Endothelial cell of umbilical vein (primary cell): ENCODE measurements at regions of chr17 and their contacts with region 1.

Region 1: DNA sequence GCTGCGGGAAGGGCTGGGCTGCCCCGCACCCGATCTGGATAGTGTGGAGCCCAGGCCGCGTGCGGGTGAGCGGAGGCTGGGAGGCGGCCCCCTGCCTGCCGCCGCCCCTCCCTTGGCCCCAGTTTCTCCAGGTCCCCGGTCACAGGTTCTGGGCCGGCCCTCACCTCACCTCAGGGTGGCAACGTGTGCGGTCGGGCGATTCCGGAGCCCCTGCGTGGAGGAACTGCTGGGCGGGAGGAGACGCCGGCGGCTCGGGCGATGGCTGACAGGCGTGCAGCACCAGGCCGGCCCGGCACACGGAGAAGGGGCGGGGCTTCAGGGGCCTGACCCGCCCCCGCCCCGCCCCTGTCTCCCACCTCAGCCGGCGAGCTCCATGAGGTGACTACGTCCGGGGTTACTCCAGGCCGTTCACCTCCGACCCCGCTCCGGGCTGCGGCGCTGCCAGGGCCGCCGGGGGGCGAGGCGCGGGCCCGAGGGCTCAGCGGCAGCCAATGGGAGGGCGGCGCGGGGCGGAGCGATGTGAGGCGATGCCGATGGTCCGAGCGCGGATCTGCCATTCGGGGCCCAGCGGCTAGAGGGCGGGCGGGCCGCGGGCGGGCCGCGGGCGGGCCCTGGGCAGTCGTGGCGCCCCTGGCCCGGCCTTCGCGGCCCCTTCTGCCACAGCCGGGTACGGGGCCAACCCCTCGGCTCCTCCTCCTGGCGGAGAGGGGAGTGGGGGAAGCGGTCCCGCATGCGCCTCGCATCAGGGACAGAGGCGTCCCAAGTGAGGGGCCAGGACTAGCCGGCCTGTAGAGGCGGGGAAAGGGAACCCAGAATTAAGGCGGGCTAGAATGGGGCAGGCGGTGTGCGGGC is 16.7 kb upstream of the C17orf78 start:
- DNase-seq: peak; percentile 95
- H3K4me3 ChIP-seq: peak overlapping the region; percentile 47 to 89 (median 84)
- H3K27ac ChIP-seq: peak overlapping the region; percentile 50
- H3K4me1 ChIP-seq: peaks cover 21% of the 10 kb centered on the region
- H3K27me3 ChIP-seq: no peaks in the 10 kb centered on the region
- CTCF ChIP-seq: peak in 1 of 2 donors; percentile 13
- POLR2A ChIP-seq: no peak

Region 2: DNA sequence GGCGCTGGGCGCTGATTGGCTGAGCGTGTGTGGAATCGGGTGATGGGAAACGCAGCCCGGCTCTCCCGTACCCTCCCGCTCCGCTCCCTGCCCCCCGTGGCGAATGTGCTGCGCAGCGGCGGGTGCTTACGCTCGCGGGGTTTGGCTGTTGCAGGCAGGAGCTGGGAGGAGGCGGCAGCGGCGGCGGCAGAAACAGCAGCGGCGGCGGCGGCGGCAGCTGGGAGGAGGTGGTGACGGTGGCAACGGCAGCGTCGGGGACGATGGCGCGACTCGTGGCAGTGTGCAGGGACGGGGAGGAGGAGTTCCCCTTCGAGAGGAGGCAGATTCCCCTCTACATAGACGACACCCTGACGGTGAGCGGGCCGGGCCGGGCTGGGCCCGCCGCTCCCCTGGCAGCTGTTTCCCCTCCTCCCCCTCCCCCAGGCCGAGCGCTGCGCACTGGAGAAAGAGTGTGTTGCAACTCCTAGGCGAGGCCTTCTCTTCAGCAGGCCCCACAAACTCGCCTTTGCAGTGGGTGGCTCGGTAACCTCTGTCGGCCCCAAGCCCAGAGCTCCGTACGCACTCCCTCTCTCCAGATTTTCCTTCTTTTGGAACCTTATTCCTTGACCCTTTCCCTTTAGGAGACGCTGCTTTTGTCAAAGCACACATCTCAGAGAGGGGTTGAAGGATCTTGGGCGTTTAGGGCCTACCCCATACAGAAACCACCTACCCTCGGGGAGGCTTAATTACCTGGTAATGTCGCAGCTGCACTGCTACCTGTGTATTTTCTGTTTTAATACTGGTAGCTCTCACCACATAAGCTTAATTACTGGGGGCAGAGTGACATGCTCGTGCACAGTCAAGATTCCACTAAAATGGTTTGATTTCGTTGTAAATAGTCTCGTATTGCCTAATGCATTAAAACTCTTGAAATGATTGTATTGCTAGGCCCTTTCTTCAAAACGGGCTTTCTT is 813.3 kb before region 1 on chr17:
- CTCF ChIA-PET with region 1: no interaction called
- POLR2A ChIA-PET with region 1: no interaction called
- dilution Hi-C with region 1: no loop called
- intact Hi-C with region 1: loop called (anchors 5 kb)
- DNase-seq: peak; percentile 96
- H3K4me3 ChIP-seq: peak overlapping the region; percentile 11 to 99 (median 78)
- H3K27ac ChIP-seq: peak overlapping the region; percentile 59
- H3K4me1 ChIP-seq: peaks cover 20% of the 10 kb centered on the region
- H3K27me3 ChIP-seq: no peaks in the 10 kb centered on the region
- CTCF ChIP-seq: peak in 1 of 2 donors; percentile 3
- POLR2A ChIP-seq: peak; percentile 13

Region 3: GRCh38 chr17:37299257-37299980 is 59.6 kb before region 1 on chr17:
- CTCF ChIA-PET with region 1: no interaction called
- POLR2A ChIA-PET with region 1: no interaction called
- dilution Hi-C with region 1: no loop called
- intact Hi-C with region 1: loop called (anchors 5 kb)
- DNase-seq: peak; percentile 66
- H3K4me3 ChIP-seq: peak overlapping the region in 1 of 3 experiments; percentile 8
- H3K27ac ChIP-seq: peak overlapping the region; percentile 47
- H3K4me1 ChIP-seq: peaks cover 29% of the 10 kb centered on the region
- H3K27me3 ChIP-seq: no peaks in the 10 kb centered on the region
- CTCF ChIP-seq: no peak
- POLR2A ChIP-seq: no peak

Region 4: GRCh38 chr17:37406635-37407461 is 47.8 kb after region 1 on chr17 and contains the starts of genes ACACA and TADA2A:
- CTCF ChIA-PET with region 1: interaction called, 4 read pairs
- POLR2A ChIA-PET with region 1: no interaction called
- dilution Hi-C with region 1: no loop called
- intact Hi-C with region 1: loop called (anchors 5 kb)
- DNase-seq: peak; percentile 81
- H3K4me3 ChIP-seq: peak within 1 kb of the TSS; percentile 67 to 96 (median 86)
- H3K27ac ChIP-seq: peak within 1 kb of the TSS; percentile 84
- H3K4me1 ChIP-seq: peaks cover 12% of the 10 kb centered on the region
- H3K27me3 ChIP-seq: no peaks in the 10 kb centered on the region
- CTCF ChIP-seq: no peak
- POLR2A ChIP-seq: peak; percentile 95
- total RNA-seq, gene ACACA: 116 and 124 TPM in 2 replicates
- total RNA-seq, gene TADA2A: 20.5 and 22.4 TPM in 2 replicates

Region 5: GRCh38 chr17:37592291-37592690 is 233.2 kb after region 1 on chr17:
- CTCF ChIA-PET with region 1: no interaction called
- POLR2A ChIA-PET with region 1: no interaction called
- dilution Hi-C with region 1: no loop called
- intact Hi-C with region 1: no loop called
- DNase-seq: no peak
- H3K4me3 ChIP-seq: no peak overlapping the region
- H3K27ac ChIP-seq: no peak overlapping the region
- H3K4me1 ChIP-seq: no peaks in the 10 kb centered on the region
- H3K27me3 ChIP-seq: no peaks in the 10 kb centered on the region
- CTCF ChIP-seq: no peak
- POLR2A ChIP-seq: no peak

Region 6: GRCh38 chr17:37609170-37610040 is 250.3 kb after region 1 on chr17 and contains the start of gene SYNRG:
- CTCF ChIA-PET with region 1: no interaction called
- POLR2A ChIA-PET with region 1: no interaction called
- dilution Hi-C with region 1: no loop called
- intact Hi-C with region 1: loop called (anchors 1 kb)
- DNase-seq: peak; percentile 98
- H3K4me3 ChIP-seq: peak within 1 kb of the TSS; percentile 79 to 97 (median 97)
- H3K27ac ChIP-seq: peak within 1 kb of the TSS; percentile 82
- H3K4me1 ChIP-seq: peaks cover 30% of the 10 kb centered on the region
- H3K27me3 ChIP-seq: no peaks in the 10 kb centered on the region
- CTCF ChIP-seq: peak; percentile 12 to 47
- POLR2A ChIP-seq: peak; percentile 92
- total RNA-seq, gene SYNRG: 42.2 and 43.3 TPM in 2 replicates